ENCODE measurements at regions of chr11 and their contacts with region 1.

Region 1: DNA sequence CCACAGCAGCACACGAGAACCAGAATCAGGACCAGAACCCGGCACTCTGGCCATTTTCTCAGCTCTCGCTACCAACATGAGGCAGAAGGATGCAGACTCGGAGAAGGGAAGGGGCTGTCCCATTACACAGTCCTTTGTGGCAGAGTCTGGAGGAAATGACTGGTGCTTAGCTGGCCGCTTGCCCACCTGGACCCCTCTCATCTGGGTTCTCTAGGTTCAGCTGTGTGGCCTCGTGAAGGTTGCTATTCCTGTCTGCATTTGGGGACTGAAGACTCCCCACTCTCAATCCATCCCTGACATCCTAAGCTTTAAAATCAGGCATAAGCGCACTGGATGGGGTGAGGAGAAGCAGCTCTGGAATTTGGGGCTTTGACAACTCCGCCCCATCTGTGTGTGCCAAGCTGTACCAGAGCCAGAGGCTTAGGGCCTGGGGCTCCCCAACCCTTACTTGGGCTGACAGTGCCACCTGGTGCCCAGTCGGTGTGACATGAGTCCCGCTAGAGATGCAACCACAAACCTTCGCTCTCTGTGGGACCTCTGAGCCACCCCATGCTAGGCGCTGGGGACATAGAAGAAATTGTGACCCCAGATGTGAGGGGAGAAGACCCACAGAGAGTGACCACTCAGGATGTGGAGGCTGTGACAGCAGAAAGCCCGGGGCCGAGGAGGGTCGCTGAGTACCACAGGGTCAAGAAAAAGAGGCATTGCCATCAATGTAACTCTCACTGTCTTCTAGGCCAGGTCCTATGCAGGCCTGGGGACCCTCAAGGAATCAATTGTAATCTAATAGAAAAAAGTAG is 35.9 kb upstream of the FCHSD2 start:
- DNase-seq: peak; percentile 93
- H3K4me3 Mint-ChIP-seq: no peak overlapping the region
- H3K27ac Mint-ChIP-seq: no peak overlapping the region
- H3K4me1 Mint-ChIP-seq: peaks cover 13% of the 10 kb centered on the region
- H3K27me3 Mint-ChIP-seq: peaks cover 18% of the 10 kb centered on the region

Region 2: GRCh38 chr11:72831513-72832300 is 346.3 kb before region 1 on chr11:
- intact Hi-C with region 1: loop called (anchors 1 kb)
- DNase-seq: peak; percentile 85
- H3K4me3 Mint-ChIP-seq: no peak overlapping the region
- H3K27ac Mint-ChIP-seq: peak overlapping the region; percentile 37
- H3K4me1 Mint-ChIP-seq: peaks cover 21% of the 10 kb centered on the region
- H3K27me3 Mint-ChIP-seq: no peaks in the 10 kb centered on the region

Region 3: GRCh38 chr11:72924568-72925190 is 253.3 kb before region 1 on chr11:
- intact Hi-C with region 1: loop called (anchors 1 kb)
- DNase-seq: no peak
- H3K4me3 Mint-ChIP-seq: no peak overlapping the region
- H3K27ac Mint-ChIP-seq: no peak overlapping the region
- H3K4me1 Mint-ChIP-seq: peaks cover 3% of the 10 kb centered on the region
- H3K27me3 Mint-ChIP-seq: no peaks in the 10 kb centered on the region